CD4-positive, alpha-beta memory T cell (primary cell): ENCODE measurements at regions of chr6 and their contacts with region 1.

Region 1: GRCh38 chr6:26156076-26156849 is 69.0 kb downstream of the HFE start:
- DNase-seq: peak; percentile 80 to 89 (median 88)
- H3K4me3 ChIP-seq: peak overlapping the region; percentile 53 to 64
- H3K4me3 Mint-ChIP-seq: peak overlapping the region; percentile 88 to 99 (median 96)
- H3K27ac ChIP-seq: peak overlapping the region; percentile 79
- H3K27ac Mint-ChIP-seq: peak overlapping the region; percentile 91 to 98 (median 95)
- H3K4me1 ChIP-seq: peaks cover 26% of the 10 kb centered on the region
- H3K4me1 Mint-ChIP-seq: peaks cover 16 to 58% (median 26%) of the 10 kb centered on the region in 4 donors
- H3K27me3 ChIP-seq: no peaks in the 10 kb centered on the region
- H3K27me3 Mint-ChIP-seq: no peaks in the 10 kb centered on the region

Region 2: GRCh38 chr6:26087284-26088115 is 68.8 kb before region 1 on chr6 and contains the start of gene HFE:
- CTCF ChIA-PET with region 1: no interaction called
- POLR2A ChIA-PET with region 1: interaction called, 49 read pairs
- intact Hi-C with region 1: no loop called
- DNase-seq: peak in 4 of 5 donors; percentile 24 to 43 (median 26)
- H3K4me3 ChIP-seq: peak within 1 kb of the TSS; percentile 67 to 79
- H3K4me3 Mint-ChIP-seq: peak within 1 kb of the TSS; percentile 77 to 93 (median 90)
- H3K27ac ChIP-seq: peak within 1 kb of the TSS; percentile 68
- H3K27ac Mint-ChIP-seq: peak within 1 kb of the TSS; percentile 71 to 94 (median 90)
- H3K4me1 ChIP-seq: peaks cover 36% of the 10 kb centered on the region
- H3K4me1 Mint-ChIP-seq: peaks cover 20 to 41% (median 28%) of the 10 kb centered on the region in 4 donors
- H3K27me3 ChIP-seq: no peaks in the 10 kb centered on the region
- H3K27me3 Mint-ChIP-seq: no peaks in the 10 kb centered on the region
- total RNA-seq, gene HFE: 3.5 to 4.2 TPM

Region 3: GRCh38 chr6:26183581-26184366 is 27.5 kb after region 1 on chr6:
- CTCF ChIA-PET with region 1: interaction called, 9 read pairs
- POLR2A ChIA-PET with region 1: interaction called, 2,476 read pairs
- intact Hi-C with region 1: loop called (anchors 2 kb)
- DNase-seq: peak; percentile 72 to 81 (median 79)
- H3K4me3 ChIP-seq: peak overlapping the region; percentile 2 to 69
- H3K4me3 Mint-ChIP-seq: peak overlapping the region; percentile 90 to 100 (median 96)
- H3K27ac ChIP-seq: peak overlapping the region; percentile 67
- H3K27ac Mint-ChIP-seq: peak overlapping the region; percentile 78 to 99 (median 95)
- H3K4me1 ChIP-seq: peaks cover 45% of the 10 kb centered on the region
- H3K4me1 Mint-ChIP-seq: peaks cover 29 to 54% (median 37%) of the 10 kb centered on the region in 4 donors
- H3K27me3 ChIP-seq: no peaks in the 10 kb centered on the region
- H3K27me3 Mint-ChIP-seq: no peaks in the 10 kb centered on the region

Region 4: DNA sequence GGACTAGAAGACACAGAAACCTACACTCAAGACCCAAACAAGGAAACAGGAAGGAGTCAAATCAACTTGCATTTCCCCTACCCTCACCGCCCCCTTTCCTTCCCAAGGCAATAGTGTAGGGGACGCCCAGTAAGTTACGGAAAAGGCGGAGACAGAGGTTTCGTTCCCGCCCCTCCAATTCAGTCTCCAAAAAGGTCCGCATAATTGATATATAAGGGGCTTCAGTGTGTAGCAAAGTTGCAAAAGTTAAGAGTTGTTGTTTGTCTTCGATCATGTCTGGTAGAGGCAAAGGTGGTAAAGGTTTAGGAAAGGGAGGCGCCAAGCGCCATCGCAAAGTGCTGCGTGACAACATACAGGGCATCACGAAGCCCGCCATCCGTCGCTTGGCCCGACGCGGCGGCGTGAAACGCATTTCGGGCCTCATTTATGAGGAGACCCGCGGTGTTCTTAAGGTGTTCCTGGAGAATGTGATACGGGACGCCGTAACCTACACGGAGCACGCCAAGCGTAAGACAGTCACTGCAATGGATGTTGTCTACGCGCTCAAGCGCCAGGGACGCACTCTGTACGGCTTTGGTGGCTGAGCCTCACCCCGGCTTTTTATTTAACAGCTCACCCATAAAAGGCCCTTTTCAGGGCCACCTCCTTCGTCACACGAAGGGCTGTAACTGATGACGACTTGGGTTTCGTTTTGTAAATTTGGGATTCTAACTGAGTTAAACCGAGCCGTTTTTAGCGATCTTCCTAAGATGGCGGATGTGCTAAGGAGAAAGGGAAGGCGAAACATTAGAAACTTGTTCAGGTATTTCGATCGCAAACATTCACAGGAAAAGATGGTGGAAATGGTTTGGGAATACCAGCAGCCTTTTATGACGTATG is 84.1 kb after region 1 on chr6:
- CTCF ChIA-PET with region 1: no interaction called
- POLR2A ChIA-PET with region 1: interaction called, 283 read pairs
- intact Hi-C with region 1: loop called (anchors 2 kb)
- DNase-seq: peak; percentile 79 to 86 (median 82)
- H3K4me3 ChIP-seq: peak overlapping the region; percentile 66 to 67
- H3K4me3 Mint-ChIP-seq: peak overlapping the region; percentile 80 to 93 (median 87)
- H3K27ac ChIP-seq: peak overlapping the region; percentile 81
- H3K27ac Mint-ChIP-seq: peak overlapping the region; percentile 89 to 99 (median 95)
- H3K4me1 ChIP-seq: peaks cover 11% of the 10 kb centered on the region
- H3K4me1 Mint-ChIP-seq: peaks cover 9 to 29% (median 15%) of the 10 kb centered on the region in 4 donors
- H3K27me3 ChIP-seq: no peaks in the 10 kb centered on the region
- H3K27me3 Mint-ChIP-seq: no peaks in the 10 kb centered on the region

Region 5: GRCh38 chr6:27132532-27133280 is 976.4 kb after region 1 on chr6:
- CTCF ChIA-PET with region 1: no interaction called
- POLR2A ChIA-PET with region 1: interaction called, 62 read pairs
- intact Hi-C with region 1: no loop called
- DNase-seq: peak; percentile 96 to 99 (median 98)
- H3K4me3 ChIP-seq: peak overlapping the region; percentile 72 to 90
- H3K4me3 Mint-ChIP-seq: no peak overlapping the region
- H3K27ac ChIP-seq: peak overlapping the region; percentile 93
- H3K27ac Mint-ChIP-seq: no peak overlapping the region
- H3K4me1 ChIP-seq: peaks cover 27% of the 10 kb centered on the region
- H3K4me1 Mint-ChIP-seq: peaks cover 0 to 24% (median 10%) of the 10 kb centered on the region in 4 donors
- H3K27me3 ChIP-seq: no peaks in the 10 kb centered on the region
- H3K27me3 Mint-ChIP-seq: no peaks in the 10 kb centered on the region

Region 6: DNA sequence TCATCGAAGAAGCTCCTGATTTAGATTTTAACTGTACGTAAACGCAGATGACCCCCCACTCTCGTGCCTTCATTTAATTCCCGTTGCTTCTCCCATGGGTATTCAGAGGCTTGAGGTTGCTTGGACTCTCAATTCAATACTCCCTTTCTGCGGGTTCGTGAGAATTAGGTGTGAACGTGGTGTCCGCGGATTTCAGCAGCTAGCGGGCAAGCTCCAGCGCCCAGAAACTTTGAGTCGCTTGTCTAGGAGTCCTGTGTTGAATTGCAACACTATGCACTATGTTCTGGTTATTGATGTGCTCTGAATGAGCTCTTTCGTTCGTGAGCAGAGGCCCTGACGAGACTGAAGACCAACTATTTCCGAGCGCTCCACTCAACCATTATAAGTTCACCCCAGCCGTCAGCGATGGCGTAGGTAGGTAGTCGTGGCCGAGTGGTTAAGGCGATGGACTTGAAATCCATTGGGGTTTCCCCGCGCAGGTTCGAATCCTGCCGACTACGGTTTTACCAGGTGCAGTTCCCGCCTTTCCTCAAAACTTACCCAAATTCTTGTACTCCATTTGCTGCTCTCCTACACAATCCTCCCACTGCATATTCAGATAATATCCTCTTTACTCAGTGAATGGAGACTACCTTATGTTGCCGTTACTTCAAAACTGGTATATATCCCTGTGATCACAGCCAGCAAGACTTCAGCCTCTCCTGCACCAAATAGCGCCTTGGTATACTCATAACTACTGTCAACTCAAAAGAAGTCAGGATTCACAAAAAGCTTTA is 1389.2 kb after region 1 on chr6:
- CTCF ChIA-PET with region 1: no interaction called
- POLR2A ChIA-PET with region 1: no interaction called
- intact Hi-C with region 1: no loop called
- DNase-seq: no peak
- H3K4me3 ChIP-seq: no peak overlapping the region
- H3K4me3 Mint-ChIP-seq: peak overlapping the region in 4 of 8 donors; percentile 27 to 40 (median 32)
- H3K27ac ChIP-seq: no peak overlapping the region
- H3K27ac Mint-ChIP-seq: peak overlapping the region in 3 of 7 donors; percentile 10 to 36 (median 35)
- H3K4me1 ChIP-seq: peaks cover 14% of the 10 kb centered on the region
- H3K4me1 Mint-ChIP-seq: peaks cover 0 to 14% (median 10%) of the 10 kb centered on the region in 4 donors
- H3K27me3 ChIP-seq: peaks cover 64% of the 10 kb centered on the region
- H3K27me3 Mint-ChIP-seq: peaks cover 77 to 79% of the 10 kb centered on the region in 2 donors

Region 7: GRCh38 chr6:27864906-27865849 is 1708.9 kb after region 1 on chr6:
- CTCF ChIA-PET with region 1: no interaction called
- POLR2A ChIA-PET with region 1: interaction called, 66 read pairs
- intact Hi-C with region 1: no loop called
- DNase-seq: peak; percentile 86 to 93 (median 91)
- H3K4me3 ChIP-seq: peak overlapping the region; percentile 33 to 69
- H3K4me3 Mint-ChIP-seq: peak overlapping the region; percentile 96 to 99 (median 99)
- H3K27ac ChIP-seq: peak overlapping the region; percentile 62
- H3K27ac Mint-ChIP-seq: peak overlapping the region; percentile 94 to 99 (median 98)
- H3K4me1 ChIP-seq: peaks cover 31% of the 10 kb centered on the region
- H3K4me1 Mint-ChIP-seq: peaks cover 18 to 46% (median 34%) of the 10 kb centered on the region in 4 donors
- H3K27me3 ChIP-seq: no peaks in the 10 kb centered on the region
- H3K27me3 Mint-ChIP-seq: no peaks in the 10 kb centered on the region